PC-3 (cell line): ENCODE measurements at regions of chr11 and their contacts with region 1.

Region 1: GRCh38 chr11:128279866-128280265 is 307.5 kb downstream of the ETS1 start:
- DNase-seq: peak; percentile 23
- ATAC-seq: peak; percentile 83
- H3K4me3 ChIP-seq: no peak overlapping the region
- H3K27ac ChIP-seq: no peak overlapping the region
- H3K4me1 ChIP-seq: no peaks in the 10 kb centered on the region
- H3K27me3 ChIP-seq: no peaks in the 10 kb centered on the region
- CTCF ChIP-seq: no peak

Region 2: GRCh38 chr11:128039140-128040021 is 240.5 kb before region 1 on chr11:
- CTCF ChIA-PET with region 1: no interaction called
- POLR2A ChIA-PET with region 1: no interaction called
- intact Hi-C with region 1: loop called (anchors 10 kb)
- DNase-seq: peak; percentile 94
- ATAC-seq: peak; percentile 92
- H3K4me3 ChIP-seq: no peak overlapping the region
- H3K27ac ChIP-seq: peak overlapping the region; percentile 42
- H3K4me1 ChIP-seq: peaks cover 51% of the 10 kb centered on the region
- H3K27me3 ChIP-seq: no peaks in the 10 kb centered on the region
- CTCF ChIP-seq: peak; percentile 43; the same call in 1 of the 2 replicates

Region 3: GRCh38 chr11:128297091-128297651 is 17.3 kb after region 1 on chr11:
- CTCF ChIA-PET with region 1: no interaction called
- POLR2A ChIA-PET with region 1: no interaction called
- intact Hi-C with region 1: no loop called
- DNase-seq: no peak
- ATAC-seq: peak; percentile 73
- H3K4me3 ChIP-seq: no peak overlapping the region
- H3K27ac ChIP-seq: no peak overlapping the region
- H3K4me1 ChIP-seq: peaks cover 15% of the 10 kb centered on the region
- H3K27me3 ChIP-seq: no peaks in the 10 kb centered on the region
- CTCF ChIP-seq: no peak

Region 4: GRCh38 chr11:128323381-128323780 is 43.5 kb after region 1 on chr11:
- CTCF ChIA-PET with region 1: no interaction called
- POLR2A ChIA-PET with region 1: no interaction called
- intact Hi-C with region 1: no loop called
- DNase-seq: no peak
- ATAC-seq: peak; percentile 51; the same call in 1 of the 2 replicates
- H3K4me3 ChIP-seq: no peak overlapping the region
- H3K27ac ChIP-seq: no peak overlapping the region
- H3K4me1 ChIP-seq: no peaks in the 10 kb centered on the region
- H3K27me3 ChIP-seq: no peaks in the 10 kb centered on the region
- CTCF ChIP-seq: peak; percentile 57; the same call in 1 of the 2 replicates